ENCODE measurements at regions of chr6 and their contacts with region 1.

Region 1: DNA sequence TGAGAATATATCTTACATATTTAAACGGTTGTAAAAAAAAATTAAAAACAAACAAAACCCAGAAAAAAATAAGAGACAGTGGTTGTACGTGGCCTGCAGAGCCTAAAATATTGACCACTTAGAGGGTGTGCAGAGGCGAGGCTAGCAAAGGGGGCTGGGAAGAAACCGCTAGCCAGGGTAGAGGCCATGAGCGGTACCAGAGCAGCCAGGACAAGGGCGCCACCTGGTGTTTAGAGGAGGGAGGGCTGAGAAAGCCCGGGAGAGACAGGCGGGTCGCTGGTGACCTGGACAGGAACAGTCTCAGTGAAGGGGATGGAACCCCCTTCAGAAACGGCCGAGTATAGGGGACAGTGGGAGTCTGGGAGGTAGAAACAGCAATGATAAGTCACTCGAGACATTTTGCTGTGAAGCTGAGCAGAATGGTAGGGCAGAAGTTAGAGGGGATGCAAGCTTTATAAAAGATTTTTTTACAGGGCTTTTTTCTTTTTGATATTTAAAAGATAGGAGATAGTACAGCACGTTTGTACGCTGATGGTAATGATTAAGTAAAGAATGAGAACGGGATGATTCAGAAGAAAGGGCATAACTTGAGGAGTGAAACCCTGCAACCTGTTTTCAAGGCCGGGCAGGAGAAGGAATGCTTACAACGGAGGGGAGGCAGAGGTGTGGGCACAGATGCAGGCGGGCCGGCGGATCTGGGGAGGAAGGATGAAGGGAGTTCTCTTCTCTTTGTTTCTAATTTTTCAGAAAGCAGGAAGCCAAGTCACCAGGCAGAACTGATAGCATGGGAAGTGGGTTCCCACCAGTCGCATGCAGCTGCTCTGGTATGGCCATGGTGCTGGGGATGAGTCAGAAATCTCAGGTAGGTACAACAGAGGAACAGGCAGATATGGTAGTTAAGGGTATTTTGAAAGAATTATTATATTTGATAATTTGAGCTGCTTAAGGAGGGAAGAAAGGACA is 76.2 kb downstream of the FAM229B start:
- DNase-seq: peak; percentile 56 to 83 (median 68)
- ATAC-seq: peak; percentile 97
- H3K4me3 ChIP-seq: no peak overlapping the region
- H3K4me3 Mint-ChIP-seq: peak overlapping the region; percentile 35
- H3K27ac ChIP-seq: no peak overlapping the region
- H3K27ac Mint-ChIP-seq: no peak overlapping the region
- H3K4me1 ChIP-seq: peaks cover 10% of the 10 kb centered on the region
- H3K4me1 Mint-ChIP-seq: peaks cover 12% of the 10 kb centered on the region
- H3K27me3 ChIP-seq: peaks cover 0 to 11% of the 10 kb centered on the region in 2 experiments
- H3K27me3 Mint-ChIP-seq: peaks cover 32% of the 10 kb centered on the region
- CTCF ChIP-seq: peak; percentile 87

Region 2: DNA sequence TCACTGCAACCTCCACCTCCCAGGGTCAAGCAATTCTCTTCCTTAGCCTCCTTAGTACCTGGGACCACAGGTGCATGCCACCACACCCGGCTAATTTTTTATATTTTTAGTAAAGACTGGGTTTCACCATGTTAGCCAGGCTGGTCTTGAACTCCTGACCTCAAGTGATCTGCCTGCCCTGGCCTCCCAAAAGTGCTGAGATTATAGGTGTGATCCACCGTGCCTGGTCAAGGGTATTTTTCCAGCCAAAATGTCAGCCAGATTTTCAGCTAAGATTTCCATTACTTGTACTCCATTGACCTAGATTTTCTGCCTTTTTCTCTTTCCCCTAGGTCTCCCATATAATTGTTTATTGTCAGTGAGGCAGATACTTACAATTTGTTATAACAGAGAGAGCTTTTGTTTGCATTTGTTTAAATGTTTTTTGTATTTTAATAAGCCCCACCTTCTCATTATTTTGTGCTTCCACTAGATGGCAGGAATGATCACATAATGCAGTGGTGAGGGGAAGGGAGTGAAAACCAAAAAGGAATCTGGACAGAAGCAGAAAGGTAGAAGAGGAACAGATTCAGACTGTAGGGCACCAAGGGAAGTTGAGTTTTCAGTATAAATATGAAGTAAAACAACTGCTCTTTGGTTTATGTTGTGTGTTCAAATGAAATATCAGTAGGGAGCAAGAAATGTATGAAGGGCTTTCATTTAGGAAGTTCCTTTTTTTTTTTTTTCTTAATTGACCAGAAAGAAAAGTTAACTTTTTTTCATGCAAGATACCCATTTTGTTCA is 1152.0 kb before region 1 on chr6:
- CTCF ChIA-PET with region 1: interaction called, 3 read pairs
- POLR2A ChIA-PET with region 1: no interaction called
- intact Hi-C with region 1: loop called (anchors 1 to 2 kb)
- DNase-seq: peak in 4 of 14 experiments; percentile 3 to 64 (median 57)
- ATAC-seq: peak; percentile 82
- H3K4me3 ChIP-seq: no peak overlapping the region
- H3K4me3 Mint-ChIP-seq: no peak overlapping the region
- H3K27ac ChIP-seq: no peak overlapping the region
- H3K27ac Mint-ChIP-seq: no peak overlapping the region
- H3K4me1 ChIP-seq: no peaks in the 10 kb centered on the region
- H3K4me1 Mint-ChIP-seq: peaks cover 5% of the 10 kb centered on the region
- H3K27me3 ChIP-seq: no peaks in the 10 kb centered on the region
- H3K27me3 Mint-ChIP-seq: no peaks in the 10 kb centered on the region
- CTCF ChIP-seq: peak; percentile 78

Region 3: GRCh38 chr6:112018619-112019416 is 144.8 kb before region 1 on chr6:
- CTCF ChIA-PET with region 1: no interaction called
- POLR2A ChIA-PET with region 1: no interaction called
- intact Hi-C with region 1: loop called in 1 of 2 experiments (anchors 10 kb)
- DNase-seq: no peak
- ATAC-seq: no peak
- H3K4me3 ChIP-seq: no peak overlapping the region
- H3K4me3 Mint-ChIP-seq: no peak overlapping the region
- H3K27ac ChIP-seq: no peak overlapping the region
- H3K27ac Mint-ChIP-seq: no peak overlapping the region
- H3K4me1 ChIP-seq: peaks cover 31% of the 10 kb centered on the region
- H3K4me1 Mint-ChIP-seq: peaks cover 82% of the 10 kb centered on the region
- H3K27me3 ChIP-seq: no peaks in the 10 kb centered on the region
- H3K27me3 Mint-ChIP-seq: no peaks in the 10 kb centered on the region
- CTCF ChIP-seq: no peak

Region 4: GRCh38 chr6:112087136-112087911 is 76.3 kb before region 1 on chr6 and contains the starts of genes FAM229B and TUBE1:
- CTCF ChIA-PET with region 1: interaction called, 16 read pairs
- POLR2A ChIA-PET with region 1: no interaction called
- intact Hi-C with region 1: loop called (anchors 2 kb)
- DNase-seq: peak; percentile 81 to 98 (median 84)
- ATAC-seq: peak; percentile 97
- H3K4me3 ChIP-seq: peak within 1 kb of the TSS; percentile 88
- H3K4me3 Mint-ChIP-seq: no peak within 1 kb of the TSS
- H3K27ac ChIP-seq: peak within 1 kb of the TSS; percentile 60 to 84
- H3K27ac Mint-ChIP-seq: no peak within 1 kb of the TSS
- H3K4me1 ChIP-seq: peaks cover 3% of the 10 kb centered on the region
- H3K4me1 Mint-ChIP-seq: peaks cover 11% of the 10 kb centered on the region
- H3K27me3 ChIP-seq: peaks cover 0 to 6% of the 10 kb centered on the region in 2 experiments
- H3K27me3 Mint-ChIP-seq: peaks cover 28% of the 10 kb centered on the region
- CTCF ChIP-seq: no peak
- total RNA-seq, gene FAM229B: 3.6 to 4.4 TPM
- total RNA-seq, gene TUBE1: 28.2 to 30.8 TPM

Region 5: DNA sequence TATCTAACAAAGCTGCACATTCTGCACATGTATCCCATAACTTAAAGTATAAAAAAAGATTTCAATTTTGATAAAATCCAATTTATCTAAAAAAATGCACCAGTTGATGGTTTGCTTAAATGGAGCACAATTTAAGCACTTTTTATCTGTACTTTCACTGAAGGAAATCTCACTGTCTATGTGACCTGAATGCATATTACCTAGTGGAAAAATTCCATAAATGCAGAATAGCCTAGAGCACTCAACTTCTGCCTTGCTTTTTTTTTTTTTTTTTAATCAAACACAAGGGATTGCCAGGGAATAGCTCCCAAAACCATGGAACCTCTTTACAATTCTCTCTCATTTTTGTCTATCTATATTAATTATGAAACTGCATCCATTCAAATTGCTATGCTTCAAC is 263.9 kb after region 1 on chr6:
- CTCF ChIA-PET with region 1: no interaction called
- POLR2A ChIA-PET with region 1: no interaction called
- intact Hi-C with region 1: no loop called
- DNase-seq: no peak
- ATAC-seq: no peak
- H3K4me3 ChIP-seq: no peak overlapping the region
- H3K4me3 Mint-ChIP-seq: no peak overlapping the region
- H3K27ac ChIP-seq: no peak overlapping the region
- H3K27ac Mint-ChIP-seq: no peak overlapping the region
- H3K4me1 ChIP-seq: no peaks in the 10 kb centered on the region
- H3K4me1 Mint-ChIP-seq: no peaks in the 10 kb centered on the region
- H3K27me3 ChIP-seq: no peaks in the 10 kb centered on the region
- H3K27me3 Mint-ChIP-seq: peaks cover 7% of the 10 kb centered on the region
- CTCF ChIP-seq: no peak